ENCODE measurements at regions of chr14 and their contacts with region 1.

Region 1: GRCh38 chr14:90883782-90884181 is 67.6 kb upstream of the TTC7B start:
- DNase-seq: no peak
- ATAC-seq: no peak
- H3K4me3 ChIP-seq: no peak overlapping the region
- H3K27ac ChIP-seq: no peak overlapping the region
- H3K4me1 ChIP-seq: no peaks in the 10 kb centered on the region
- H3K27me3 ChIP-seq: no peaks in the 10 kb centered on the region
- CTCF ChIP-seq: no peak

Region 2: DNA sequence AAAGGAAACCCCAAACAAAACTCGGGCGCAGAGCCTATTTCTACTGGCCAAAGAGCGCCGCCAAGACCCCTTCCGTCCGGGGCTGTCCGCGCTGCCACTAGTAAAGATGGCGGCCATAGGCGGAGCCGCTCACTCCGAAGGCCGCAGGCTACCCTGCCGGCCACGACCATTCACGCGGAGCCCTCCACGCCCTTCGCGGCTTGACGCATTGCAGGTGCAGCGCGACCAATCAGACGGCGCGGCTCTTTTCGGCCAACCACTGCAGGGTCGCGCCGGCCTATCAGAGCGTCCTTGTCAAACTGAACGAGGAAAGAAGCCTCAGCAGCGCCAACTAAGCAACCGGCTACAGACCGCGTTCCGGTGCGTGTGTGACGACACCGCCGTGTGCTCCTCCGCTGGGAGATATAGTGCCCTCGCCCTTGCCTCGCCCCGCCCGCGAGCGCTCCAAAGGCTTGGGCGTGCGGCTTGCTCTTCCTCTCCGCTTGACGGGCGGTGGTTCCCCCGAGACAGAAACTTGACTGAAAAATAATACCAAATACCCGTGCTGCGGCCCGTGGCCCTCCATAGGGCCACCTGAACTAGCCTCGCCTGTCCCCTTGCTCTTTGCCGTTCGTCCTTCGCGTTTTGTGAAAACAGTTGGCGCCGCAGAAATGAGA is 500.6 kb before region 1 on chr14:
- CTCF ChIA-PET with region 1: no interaction called
- POLR2A ChIA-PET with region 1: no interaction called
- in situ Hi-C with region 1: no loop called
- intact Hi-C with region 1: no loop called
- DNase-seq: peak; percentile 89
- ATAC-seq: peak; percentile 98
- H3K4me3 ChIP-seq: peak overlapping the region; percentile 80 to 90
- H3K27ac ChIP-seq: peak overlapping the region; percentile 93
- H3K4me1 ChIP-seq: peaks cover 15% of the 10 kb centered on the region
- H3K27me3 ChIP-seq: no peaks in the 10 kb centered on the region
- CTCF ChIP-seq: no peak

Region 3: DNA sequence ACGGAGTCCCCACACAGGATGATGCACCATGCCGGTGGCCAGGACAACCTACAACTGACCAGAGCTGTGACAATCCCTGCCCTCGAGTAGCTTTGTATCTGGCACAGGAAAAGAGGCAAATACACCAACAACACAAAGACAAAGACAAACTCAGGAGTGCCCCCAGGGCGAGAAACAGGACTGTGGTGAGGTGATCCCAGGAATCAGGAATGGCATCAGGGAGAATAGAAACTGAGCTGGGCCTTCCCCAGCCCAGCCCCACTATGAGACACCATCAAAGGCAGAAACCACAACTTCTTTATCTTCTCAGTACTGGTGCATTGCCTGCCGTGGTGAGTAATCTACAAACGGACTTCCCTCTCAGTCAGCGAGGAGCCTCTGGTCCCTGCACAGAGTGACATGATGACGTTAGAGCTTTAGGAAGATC is 225.2 kb before region 1 on chr14:
- CTCF ChIA-PET with region 1: no interaction called
- POLR2A ChIA-PET with region 1: no interaction called
- in situ Hi-C with region 1: no loop called
- intact Hi-C with region 1: no loop called
- DNase-seq: no peak
- ATAC-seq: no peak
- H3K4me3 ChIP-seq: no peak overlapping the region
- H3K27ac ChIP-seq: no peak overlapping the region
- H3K4me1 ChIP-seq: no peaks in the 10 kb centered on the region
- H3K27me3 ChIP-seq: no peaks in the 10 kb centered on the region
- CTCF ChIP-seq: no peak

Region 4: DNA sequence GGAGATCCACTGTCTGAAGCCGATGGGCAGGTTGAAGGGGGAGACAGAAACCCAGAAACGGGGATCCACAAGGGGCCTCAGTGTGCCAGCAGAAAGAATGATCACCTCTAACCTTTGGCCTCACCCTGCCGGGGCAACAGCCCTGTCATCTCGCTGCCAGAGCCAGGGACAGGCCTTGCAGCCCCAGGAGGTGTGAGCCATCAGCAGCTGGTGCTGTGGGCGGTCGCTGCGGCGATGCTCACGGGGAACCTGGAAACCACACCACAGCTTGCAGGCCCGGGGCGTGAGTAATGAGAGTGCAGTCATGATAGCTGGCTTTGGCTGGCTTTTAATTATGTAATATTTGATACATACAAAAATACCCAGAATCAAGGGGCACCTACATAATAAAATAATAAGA is 62.8 kb before region 1 on chr14:
- CTCF ChIA-PET with region 1: no interaction called
- POLR2A ChIA-PET with region 1: no interaction called
- in situ Hi-C with region 1: no loop called
- intact Hi-C with region 1: no loop called
- DNase-seq: no peak
- ATAC-seq: no peak
- H3K4me3 ChIP-seq: no peak overlapping the region
- H3K27ac ChIP-seq: no peak overlapping the region
- H3K4me1 ChIP-seq: no peaks in the 10 kb centered on the region
- H3K27me3 ChIP-seq: no peaks in the 10 kb centered on the region
- CTCF ChIP-seq: no peak

Region 5: DNA sequence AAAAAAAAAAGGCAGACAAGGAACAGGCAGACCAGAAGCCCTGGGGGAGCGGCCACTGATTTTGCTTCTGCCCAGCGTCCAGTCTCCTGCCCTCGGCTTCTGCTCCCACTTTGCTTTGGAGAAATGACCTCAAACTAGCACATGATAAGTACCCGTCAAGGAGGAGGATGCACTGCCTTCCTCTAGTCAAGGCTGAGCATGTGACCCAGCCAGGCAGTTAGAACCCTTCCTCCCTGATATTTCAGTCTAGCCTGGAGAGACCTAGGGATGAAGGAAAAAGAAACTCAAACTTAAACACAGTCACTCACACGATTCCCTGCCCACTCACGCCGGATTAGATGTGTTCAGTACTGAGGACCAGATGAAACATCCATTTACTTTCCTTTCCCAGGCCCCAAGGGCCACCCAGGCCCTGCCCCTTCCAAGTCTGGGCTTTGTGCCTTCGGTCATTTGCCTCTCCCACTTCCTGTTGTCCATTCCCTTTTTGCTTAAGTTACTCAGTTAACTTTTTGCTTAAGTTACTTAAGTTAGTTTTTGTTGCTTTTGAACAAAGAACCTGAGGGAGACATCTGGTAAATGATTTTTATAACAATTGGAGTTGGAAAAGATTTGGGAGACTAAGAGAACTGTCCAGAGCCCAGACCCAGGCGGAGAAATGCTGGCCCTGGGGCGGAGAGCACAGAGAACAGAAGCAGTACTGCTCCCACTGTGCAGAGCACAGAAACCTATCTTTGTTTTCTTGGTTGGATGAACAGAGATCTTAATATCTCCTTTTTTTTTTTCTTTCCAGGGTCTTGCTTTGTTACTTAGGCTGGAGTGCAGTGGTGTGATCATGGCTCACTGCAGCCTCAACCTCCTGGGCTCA is 44.5 kb before region 1 on chr14:
- CTCF ChIA-PET with region 1: no interaction called
- POLR2A ChIA-PET with region 1: no interaction called
- in situ Hi-C with region 1: no loop called
- intact Hi-C with region 1: no loop called
- DNase-seq: no peak
- ATAC-seq: no peak
- H3K4me3 ChIP-seq: no peak overlapping the region
- H3K27ac ChIP-seq: no peak overlapping the region
- H3K4me1 ChIP-seq: no peaks in the 10 kb centered on the region
- H3K27me3 ChIP-seq: no peaks in the 10 kb centered on the region
- CTCF ChIP-seq: no peak

Region 6: GRCh38 chr14:90983560-90983959 is 99.8 kb after region 1 on chr14:
- CTCF ChIA-PET with region 1: interaction called, 10 read pairs
- POLR2A ChIA-PET with region 1: no interaction called
- in situ Hi-C with region 1: no loop called
- intact Hi-C with region 1: no loop called
- DNase-seq: no peak
- ATAC-seq: no peak
- H3K4me3 ChIP-seq: no peak overlapping the region
- H3K27ac ChIP-seq: no peak overlapping the region
- H3K4me1 ChIP-seq: no peaks in the 10 kb centered on the region
- H3K27me3 ChIP-seq: no peaks in the 10 kb centered on the region
- CTCF ChIP-seq: no peak